Mammary epithelial cell (primary cell): ENCODE measurements at regions of chr16 and their contacts with region 1.

Region 1: DNA sequence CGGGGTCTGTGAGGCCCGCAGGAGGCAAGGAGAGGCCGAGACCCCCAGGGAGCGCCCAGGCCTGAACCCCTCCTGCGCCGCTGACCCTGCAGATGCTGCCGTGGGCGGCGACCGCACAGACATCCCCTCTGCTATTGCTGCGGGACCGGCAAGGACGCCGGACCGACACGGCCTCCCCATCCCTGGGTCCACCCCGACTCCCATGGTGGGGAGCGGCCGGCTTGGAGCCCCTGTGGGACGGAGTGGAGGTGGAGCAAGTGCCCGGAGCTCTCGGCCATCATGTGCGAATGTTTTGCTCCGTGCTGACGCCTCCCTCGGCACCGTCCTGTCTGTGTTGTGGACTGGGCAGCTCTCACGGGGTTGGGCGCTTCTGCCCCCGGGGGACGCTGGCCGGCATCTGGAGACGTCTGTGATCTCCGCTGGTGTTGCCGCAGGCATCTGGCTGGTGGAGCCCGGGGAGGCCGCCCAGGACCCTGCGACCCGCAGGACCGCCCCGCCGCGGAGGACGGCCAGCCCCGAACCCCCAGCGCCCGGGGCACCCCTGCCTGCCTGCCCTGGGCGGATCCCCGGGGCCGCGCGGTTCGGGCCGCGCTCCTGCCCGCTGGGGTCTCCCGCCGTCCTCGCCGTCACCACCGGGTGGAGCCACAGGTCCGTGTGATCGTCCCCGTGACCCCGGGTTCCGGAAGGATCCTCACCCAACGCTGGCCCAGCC is 12.8 kb upstream of the GNG13 start:
- DNase-seq: no peak
- H3K4me3 ChIP-seq: no peak overlapping the region
- H3K27ac ChIP-seq: no peak overlapping the region
- H3K4me1 ChIP-seq: peaks cover 4% of the 10 kb centered on the region
- H3K27me3 ChIP-seq: peaks cover 3% of the 10 kb centered on the region
- CTCF ChIP-seq: peak; percentile 13 to 49

Region 2: DNA sequence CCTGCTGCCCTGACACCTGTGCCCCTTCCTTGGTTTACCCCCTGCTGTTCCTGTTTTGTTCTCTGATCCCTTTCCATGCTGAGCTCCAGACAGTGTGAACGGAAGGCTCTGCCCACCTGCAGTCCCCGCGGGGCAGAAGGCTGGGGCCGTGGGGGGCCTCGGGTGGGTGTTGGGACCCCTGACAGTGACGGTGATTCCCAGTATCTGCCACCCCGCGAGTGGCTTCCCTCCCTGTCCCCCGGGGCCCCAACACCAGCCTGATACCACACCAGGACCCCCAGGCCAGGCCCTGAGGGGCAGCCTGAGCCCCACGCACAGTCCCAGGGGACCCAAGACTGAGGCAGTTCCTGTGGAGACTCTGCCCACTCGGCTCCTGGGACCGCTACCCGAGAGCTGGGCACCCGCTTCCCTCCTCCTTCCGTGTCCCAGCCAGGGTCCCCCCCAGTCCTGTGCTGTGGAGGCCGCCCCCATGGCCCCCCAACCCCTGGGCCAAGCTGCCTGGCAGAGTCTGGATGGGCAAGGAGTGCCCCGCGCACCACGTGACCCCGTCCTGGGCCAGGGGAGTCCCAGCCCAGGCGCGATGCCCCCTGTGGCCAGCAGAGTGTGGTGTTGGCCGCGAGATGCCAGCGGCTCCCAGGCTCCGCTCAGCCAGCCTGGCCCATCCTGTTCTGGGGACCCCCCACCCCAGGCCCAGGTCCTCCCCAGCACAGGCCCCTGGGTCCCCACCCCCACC is 292.7 kb after region 1 on chr16:
- CTCF ChIA-PET with region 1: no interaction called
- dilution Hi-C with region 1: no loop called
- in situ Hi-C with region 1: no loop called
- intact Hi-C with region 1: loop called (anchors 1 kb)
- DNase-seq: peak; percentile 26
- H3K4me3 ChIP-seq: no peak overlapping the region
- H3K27ac ChIP-seq: no peak overlapping the region
- H3K4me1 ChIP-seq: peaks cover 4% of the 10 kb centered on the region
- H3K27me3 ChIP-seq: peaks cover 34% of the 10 kb centered on the region
- CTCF ChIP-seq: peak; percentile 59 to 88